Activated CD4-positive, alpha-beta memory T cell treated with anti-CD3 and anti-CD28 coated beads, Interleukin-2, amount 10 ng/mL, durations not matched to agents 7 days and 5 days (primary cell): ENCODE measurements at regions of chr10 and their contacts with region 1.

Region 1: GRCh38 chr10:110901954-110902819 is 16.8 kb downstream of the BBIP1 start:
- DNase-seq: no peak
- H3K4me3 Mint-ChIP-seq: no peak overlapping the region
- H3K27ac Mint-ChIP-seq: peak overlapping the region; percentile 36
- H3K4me1 Mint-ChIP-seq: peaks cover 27% of the 10 kb centered on the region
- H3K27me3 Mint-ChIP-seq: no peaks in the 10 kb centered on the region

Region 2: DNA sequence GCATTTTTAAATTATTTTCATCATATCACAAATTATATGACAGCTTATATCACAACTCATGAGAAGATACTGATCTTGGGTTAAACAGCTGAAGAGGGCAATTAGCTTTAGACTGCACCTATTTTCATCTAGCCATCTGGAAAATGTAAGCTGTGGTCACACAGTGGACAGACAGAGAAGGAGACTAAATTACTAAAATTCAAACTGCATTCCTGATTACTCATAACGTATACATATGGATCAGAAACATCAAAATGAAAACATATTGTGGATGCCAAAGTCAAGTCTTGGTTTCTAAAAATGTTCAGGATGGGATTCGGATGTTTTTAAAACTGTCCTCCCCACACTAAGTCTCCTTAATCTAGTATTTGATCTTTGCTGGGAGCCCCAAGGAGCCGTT is 10.2 kb after region 1 on chr10:
- CTCF ChIA-PET with region 1: interaction called, 10 read pairs
- POLR2A ChIA-PET with region 1: interaction called, 20 read pairs
- DNase-seq: no peak
- H3K4me3 Mint-ChIP-seq: no peak overlapping the region
- H3K27ac Mint-ChIP-seq: no peak overlapping the region
- H3K4me1 Mint-ChIP-seq: peaks cover 7% of the 10 kb centered on the region
- H3K27me3 Mint-ChIP-seq: no peaks in the 10 kb centered on the region

Region 3: DNA sequence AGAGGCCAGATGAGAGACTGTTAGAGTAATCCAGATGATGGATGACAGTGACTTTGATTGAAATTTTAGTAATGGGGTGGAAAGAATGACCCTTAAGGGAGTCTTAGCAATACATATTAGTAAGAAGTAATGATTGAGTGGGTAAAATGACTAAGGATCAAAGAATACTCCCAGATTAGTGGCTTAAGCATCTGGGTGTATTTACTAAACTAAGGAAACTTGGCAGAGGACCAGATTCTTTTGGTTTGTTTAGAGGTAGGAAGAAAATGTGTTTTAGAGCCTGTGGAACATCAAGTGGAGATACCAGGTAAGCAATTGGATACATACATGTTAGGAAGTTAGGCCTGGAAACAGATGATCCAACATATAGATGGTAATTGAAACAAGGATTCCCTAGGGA is 115.8 kb after region 1 on chr10:
- CTCF ChIA-PET with region 1: no interaction called
- POLR2A ChIA-PET with region 1: no interaction called
- DNase-seq: no peak
- H3K4me3 Mint-ChIP-seq: no peak overlapping the region
- H3K27ac Mint-ChIP-seq: no peak overlapping the region
- H3K4me1 Mint-ChIP-seq: peaks cover 9% of the 10 kb centered on the region
- H3K27me3 Mint-ChIP-seq: no peaks in the 10 kb centered on the region